ENCODE measurements at regions of chr3 and their contacts with region 1.

Region 1: DNA sequence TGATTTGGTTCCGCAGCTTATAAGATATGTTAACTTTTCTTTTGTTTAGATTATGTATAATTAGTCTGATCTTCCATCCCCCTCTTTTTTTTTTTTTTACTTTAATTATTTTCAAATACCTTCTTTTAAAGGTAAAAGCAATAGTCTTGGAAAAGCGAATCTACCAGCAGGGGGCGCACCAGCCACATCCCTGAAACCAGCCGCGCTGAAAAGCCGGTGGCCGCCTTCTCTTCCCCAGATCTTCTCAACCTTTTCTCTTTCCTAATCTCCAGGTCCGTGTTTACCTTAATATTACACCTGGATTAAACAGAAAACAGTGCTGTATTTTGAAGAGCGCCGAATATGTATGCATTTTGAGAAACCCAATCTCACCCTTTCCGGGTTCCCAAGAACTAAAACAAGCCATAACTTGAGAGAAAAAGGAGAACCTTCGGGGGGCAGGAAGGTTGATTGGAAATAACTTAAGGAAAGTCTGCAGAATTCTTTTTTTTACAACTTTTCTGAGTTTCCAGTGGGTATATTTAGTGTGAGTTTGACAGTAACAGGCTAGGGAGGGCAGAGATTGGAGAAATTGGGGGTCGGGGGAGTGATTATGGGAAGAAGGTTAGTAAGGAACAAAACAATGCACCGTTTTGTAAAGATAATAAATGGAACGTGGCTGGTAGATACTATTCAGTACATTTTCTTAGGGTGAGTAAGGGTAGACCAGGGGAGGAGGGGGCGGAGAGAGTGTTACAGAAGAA is 2.0 kb upstream of the SOX2 start:
- DNase-seq: peak in 1 of 2 donors; percentile 87
- ATAC-seq: peak; percentile 60

Region 2: GRCh38 chr3:181773921-181774320 is 64.2 kb after region 1 on chr3:
- intact Hi-C with region 1: no loop called
- DNase-seq: no peak
- ATAC-seq: no peak

Region 3: DNA sequence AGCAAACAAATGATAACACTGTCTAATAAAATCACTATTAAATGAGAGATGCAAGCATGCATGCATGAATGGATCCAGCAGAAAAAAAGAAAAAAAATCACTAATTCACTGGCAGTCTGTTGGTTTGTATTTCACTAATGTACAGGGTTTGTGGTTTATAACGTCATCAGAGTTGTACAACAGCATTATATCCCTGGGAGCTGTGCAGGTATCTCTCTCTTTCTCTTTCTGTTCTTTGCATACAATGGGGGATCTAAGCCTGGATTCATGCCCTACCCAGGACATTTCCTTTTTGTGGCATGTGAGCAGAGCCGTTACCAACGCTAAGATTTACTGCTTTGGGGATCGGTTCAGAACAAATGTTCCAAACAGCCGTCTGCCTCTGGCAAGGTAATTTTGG is 231.5 kb after region 1 on chr3:
- intact Hi-C with region 1: no loop called
- DNase-seq: no peak
- ATAC-seq: no peak

Region 4: GRCh38 chr3:182118081-182118480 is 408.4 kb after region 1 on chr3:
- intact Hi-C with region 1: no loop called
- DNase-seq: no peak
- ATAC-seq: no peak

Region 5: DNA sequence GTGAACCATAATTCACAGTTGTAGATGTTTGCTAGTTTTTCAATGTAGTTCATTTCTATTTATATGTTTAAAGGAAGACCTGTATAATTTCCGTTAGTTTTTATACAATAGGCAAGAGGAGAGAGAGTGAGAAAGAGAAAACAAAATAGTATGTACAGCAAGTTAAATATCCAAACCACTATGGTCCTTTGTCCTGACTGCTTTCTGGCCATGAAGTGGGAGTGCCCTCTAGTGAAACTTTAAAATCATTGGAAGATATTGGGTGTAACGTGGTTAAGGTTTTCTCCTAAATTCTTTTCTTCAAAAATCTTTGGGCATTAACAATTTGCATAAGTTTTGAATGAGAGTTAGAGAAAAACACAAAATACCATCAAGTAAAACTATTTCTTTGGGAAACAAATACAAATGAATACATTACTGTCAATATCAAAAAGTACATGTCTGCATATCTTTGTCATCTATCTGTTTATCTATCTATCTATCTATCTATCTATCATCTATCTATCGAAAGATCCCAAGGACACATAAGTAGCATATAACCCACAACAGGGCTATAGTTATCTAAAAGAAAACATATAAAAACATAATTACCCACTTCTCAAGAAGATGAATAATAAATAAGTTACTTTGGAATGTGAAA is 549.0 kb after region 1 on chr3:
- intact Hi-C with region 1: loop called in 1 of 2 experiments (anchors 5 kb)
- DNase-seq: no peak
- ATAC-seq: peak; percentile 56

Region 6: GRCh38 chr3:182294256-182294655 is 584.5 kb after region 1 on chr3:
- intact Hi-C with region 1: no loop called
- DNase-seq: no peak
- ATAC-seq: no peak

Measured in left colon (tissue), 2 donors.